ENCODE measurements at regions of chr22 and their contacts with region 1.

Region 1: GRCh38 chr22:42596336-42596735 is 18.3 kb downstream of the POLDIP3 start:
- DNase-seq: no peak
- H3K4me3 ChIP-seq: no peak overlapping the region
- H3K27ac ChIP-seq: no peak overlapping the region
- H3K4me1 ChIP-seq: no peaks in the 10 kb centered on the region
- H3K27me3 ChIP-seq: no peaks in the 10 kb centered on the region
- CTCF ChIP-seq: no peak
- EP300 ChIP-seq: no peak
- POLR2A ChIP-seq: no peak
- RAD21 ChIP-seq: no peak

Region 2: GRCh38 chr22:42544686-42545085 is 51.6 kb before region 1 on chr22:
- CTCF ChIA-PET with region 1: no interaction called
- POLR2A ChIA-PET with region 1: no interaction called
- DNase-seq: no peak
- H3K4me3 ChIP-seq: no peak overlapping the region
- H3K27ac ChIP-seq: no peak overlapping the region
- H3K4me1 ChIP-seq: 0 out of 7 replicates have a peak, but pooled peaks cover 0 to 4% (median 2%) of the 10 kb centered on the region in 4 experiments
- H3K27me3 ChIP-seq: no peaks in the 10 kb centered on the region; a peak in 1 of 7 replicates
- CTCF ChIP-seq: no peak
- EP300 ChIP-seq: no peak
- POLR2A ChIP-seq: no peak
- RAD21 ChIP-seq: no peak

Region 3: GRCh38 chr22:42581762-42582716 is 14.3 kb before region 1 on chr22:
- CTCF ChIA-PET with region 1: interaction called, 11 read pairs
- POLR2A ChIA-PET with region 1: interaction called, 18 read pairs
- DNase-seq: peak; percentile 7 to 88
- H3K4me3 ChIP-seq: peak overlapping the region; percentile 67 to 89 (median 71)
- H3K27ac ChIP-seq: peak overlapping the region; percentile 85; the same call in 1 of the 2 replicates
- H3K4me1 ChIP-seq: no peaks in the 10 kb centered on the region
- H3K27me3 ChIP-seq: no peaks in the 10 kb centered on the region
- CTCF ChIP-seq: no peak
- EP300 ChIP-seq: no peak
- POLR2A ChIP-seq: peak; percentile 74 to 87
- RAD21 ChIP-seq: no peak

Region 4: GRCh38 chr22:42608823-42609361 is 12.6 kb after region 1 on chr22:
- CTCF ChIA-PET with region 1: interaction called, 19 read pairs
- POLR2A ChIA-PET with region 1: interaction called, 399 read pairs
- DNase-seq: no peak
- H3K4me3 ChIP-seq: no peak overlapping the region
- H3K27ac ChIP-seq: no peak overlapping the region
- H3K4me1 ChIP-seq: peaks cover 6 to 8% (median 7%) of the 10 kb centered on the region in 4 experiments
- H3K27me3 ChIP-seq: no peaks in the 10 kb centered on the region
- CTCF ChIP-seq: no peak
- EP300 ChIP-seq: no peak
- POLR2A ChIP-seq: no peak
- RAD21 ChIP-seq: no peak

Region 5: DNA sequence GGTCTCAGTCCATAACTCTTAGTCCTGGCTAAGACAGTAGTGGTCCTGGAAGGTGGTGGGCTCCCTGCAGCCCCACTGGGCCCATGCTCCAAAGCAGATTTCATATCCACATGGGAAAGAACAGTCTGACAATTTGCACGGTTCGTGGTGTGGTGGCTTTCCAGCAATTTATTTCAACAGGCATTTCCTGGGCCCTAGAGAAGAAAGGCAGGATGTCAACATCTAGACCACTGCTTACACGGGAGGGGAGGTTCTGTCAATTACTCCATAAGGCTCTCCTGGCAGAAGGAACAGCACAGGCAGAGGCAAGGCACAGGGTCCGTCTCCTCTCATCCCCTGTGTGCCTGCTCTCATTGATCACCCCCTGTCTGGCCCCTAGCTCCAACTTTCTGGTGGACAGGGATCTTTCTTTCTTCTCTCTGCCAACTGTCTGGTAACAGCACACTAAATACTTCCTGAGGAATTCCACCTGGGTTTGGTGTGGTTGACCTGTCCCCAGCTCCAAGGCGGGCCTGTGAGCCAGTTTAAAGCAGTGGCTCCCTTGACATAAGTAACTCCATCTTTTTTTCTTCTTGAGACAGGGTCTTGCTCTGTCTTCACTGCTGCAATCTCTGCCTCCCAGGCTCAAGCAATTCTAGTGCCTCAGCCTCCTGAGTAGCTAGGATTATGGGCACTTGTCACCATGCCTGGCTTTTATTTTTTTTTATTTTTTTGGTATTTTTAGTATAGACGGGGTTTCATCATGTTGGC is 129.4 kb after region 1 on chr22:
- CTCF ChIA-PET with region 1: no interaction called
- POLR2A ChIA-PET with region 1: no interaction called
- DNase-seq: no peak
- H3K4me3 ChIP-seq: no peak overlapping the region
- H3K27ac ChIP-seq: no peak overlapping the region
- H3K4me1 ChIP-seq: peaks cover 2 to 7% (median 4%) of the 10 kb centered on the region in 4 experiments; a peak in 6 of 7 replicates
- H3K27me3 ChIP-seq: peaks cover 2 to 11% (median 10%) of the 10 kb centered on the region in 4 experiments
- CTCF ChIP-seq: no peak
- EP300 ChIP-seq: no peak
- POLR2A ChIP-seq: no peak
- RAD21 ChIP-seq: no peak